ENCODE measurements at regions of chr12 and their contacts with region 1.

Region 1: GRCh38 chr12:32679091-32679919 is at the start of gene DNM1L:
- DNase-seq: peak; percentile 85 to 93 (median 92)
- ATAC-seq: peak; percentile 99
- H3K4me3 ChIP-seq: peak within 1 kb of the TSS; percentile 83
- H3K4me3 Mint-ChIP-seq: peak within 1 kb of the TSS; percentile 83 to 97 (median 93)
- H3K27ac ChIP-seq: peak within 1 kb of the TSS; percentile 82
- H3K27ac Mint-ChIP-seq: peak within 1 kb of the TSS; percentile 59 to 95 (median 89)
- H3K4me1 ChIP-seq: peaks cover 9 to 11% of the 10 kb centered on the region in 2 donors
- H3K4me1 Mint-ChIP-seq: peaks cover 16 to 39% (median 31%) of the 10 kb centered on the region in 7 donors
- H3K27me3 ChIP-seq: no peaks in the 10 kb centered on the region
- H3K27me3 Mint-ChIP-seq: no peaks in the 10 kb centered on the region
- total RNA-seq, gene DNM1L: 41.6 to 68.4 (median 58.9) TPM

Region 2: DNA sequence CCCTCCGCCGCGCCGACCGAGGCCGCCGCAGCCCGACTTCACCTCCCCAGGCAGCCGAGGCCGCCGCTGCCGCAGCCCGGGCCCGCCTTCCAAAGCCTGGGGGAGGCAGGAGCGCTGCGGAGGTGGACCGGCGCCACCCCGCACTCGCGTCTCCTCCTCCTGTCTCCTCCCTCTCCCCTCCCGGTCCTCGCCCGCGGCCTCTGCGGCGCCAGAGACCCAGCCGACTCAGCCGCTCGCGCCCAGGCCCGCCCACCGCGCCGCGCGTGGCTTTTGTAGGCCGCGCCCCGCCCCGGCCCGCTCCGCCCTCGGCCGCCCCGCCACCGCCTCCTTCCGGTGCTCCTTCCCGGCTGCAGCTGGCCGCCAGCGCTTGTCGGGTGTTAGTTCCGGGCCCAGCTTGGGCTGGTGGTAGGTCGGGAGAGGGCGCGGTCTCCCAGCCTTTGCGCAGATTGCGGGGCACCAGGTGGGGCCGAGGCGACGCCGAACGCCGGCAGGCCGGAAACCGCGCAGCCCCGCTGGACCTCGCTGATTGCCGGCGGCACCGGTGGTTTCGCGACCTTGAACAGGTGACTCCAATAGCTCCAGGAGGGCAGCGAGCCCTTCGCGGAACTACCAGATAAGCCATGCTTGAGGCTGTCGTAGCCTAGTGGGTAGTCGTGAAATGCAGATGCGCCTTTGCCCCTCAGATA is 1924.5 kb before region 1 on chr12 and contains the start of gene CAPRIN2:
- CTCF ChIA-PET with region 1: no interaction called
- POLR2A ChIA-PET with region 1: no interaction called
- intact Hi-C with region 1: loop called (anchors 1 to 10 kb)
- DNase-seq: peak; percentile 89 to 97 (median 92)
- ATAC-seq: peak; percentile 96
- H3K4me3 ChIP-seq: peak within 1 kb of the TSS; percentile 67
- H3K4me3 Mint-ChIP-seq: peak within 1 kb of the TSS; percentile 93 to 99 (median 96)
- H3K27ac ChIP-seq: peak within 1 kb of the TSS; percentile 63
- H3K27ac Mint-ChIP-seq: peak within 1 kb of the TSS; percentile 80 to 93 (median 90)
- H3K4me1 ChIP-seq: peaks cover 13 to 29% of the 10 kb centered on the region in 2 donors
- H3K4me1 Mint-ChIP-seq: peaks cover 22 to 53% (median 46%) of the 10 kb centered on the region in 7 donors
- H3K27me3 ChIP-seq: no peaks in the 10 kb centered on the region
- H3K27me3 Mint-ChIP-seq: no peaks in the 10 kb centered on the region
- total RNA-seq, gene CAPRIN2: 13.7 to 50.1 (median 28.9) TPM

Region 3: GRCh38 chr12:32106517-32107358 is 572.6 kb before region 1 on chr12 and contains the start of gene BICD1:
- CTCF ChIA-PET with region 1: no interaction called
- POLR2A ChIA-PET with region 1: no interaction called
- intact Hi-C with region 1: loop called in 1 of 2 experiments (anchors 2 kb)
- DNase-seq: peak; percentile 43 to 84 (median 65)
- ATAC-seq: peak; percentile 90
- H3K4me3 ChIP-seq: peak within 1 kb of the TSS; percentile 90
- H3K4me3 Mint-ChIP-seq: peak within 1 kb of the TSS; percentile 82 to 98 (median 96)
- H3K27ac ChIP-seq: peak within 1 kb of the TSS; percentile 67
- H3K27ac Mint-ChIP-seq: peak within 1 kb of the TSS; percentile 77 to 94 (median 91)
- H3K4me1 ChIP-seq: peaks cover 19 to 22% of the 10 kb centered on the region in 2 donors
- H3K4me1 Mint-ChIP-seq: peaks cover 11 to 42% (median 33%) of the 10 kb centered on the region in 7 donors
- H3K27me3 ChIP-seq: no peaks in the 10 kb centered on the region
- H3K27me3 Mint-ChIP-seq: peaks cover 0 to 13% (median 0%) of the 10 kb centered on the region in 5 donors
- total RNA-seq, gene BICD1: 16.7 to 25.1 (median 18.5) TPM

Region 4: GRCh38 chr12:32455607-32456071 is 223.7 kb before region 1 on chr12:
- CTCF ChIA-PET with region 1: no interaction called
- POLR2A ChIA-PET with region 1: no interaction called
- intact Hi-C with region 1: loop called in 1 of 2 experiments (anchors 2 kb)
- DNase-seq: peak in 6 of 9 donors; percentile 4 to 45 (median 32)
- ATAC-seq: peak; percentile 63
- H3K4me3 ChIP-seq: no peak overlapping the region
- H3K4me3 Mint-ChIP-seq: peak overlapping the region in 5 of 10 donors; percentile 16 to 55 (median 36)
- H3K27ac ChIP-seq: no peak overlapping the region
- H3K27ac Mint-ChIP-seq: no peak overlapping the region
- H3K4me1 ChIP-seq: no peaks in the 10 kb centered on the region
- H3K4me1 Mint-ChIP-seq: peaks cover 0 to 4% (median 0%) of the 10 kb centered on the region in 7 donors
- H3K27me3 ChIP-seq: no peaks in the 10 kb centered on the region
- H3K27me3 Mint-ChIP-seq: peaks cover 0 to 10% (median 0%) of the 10 kb centered on the region in 5 donors

Region 5: DNA sequence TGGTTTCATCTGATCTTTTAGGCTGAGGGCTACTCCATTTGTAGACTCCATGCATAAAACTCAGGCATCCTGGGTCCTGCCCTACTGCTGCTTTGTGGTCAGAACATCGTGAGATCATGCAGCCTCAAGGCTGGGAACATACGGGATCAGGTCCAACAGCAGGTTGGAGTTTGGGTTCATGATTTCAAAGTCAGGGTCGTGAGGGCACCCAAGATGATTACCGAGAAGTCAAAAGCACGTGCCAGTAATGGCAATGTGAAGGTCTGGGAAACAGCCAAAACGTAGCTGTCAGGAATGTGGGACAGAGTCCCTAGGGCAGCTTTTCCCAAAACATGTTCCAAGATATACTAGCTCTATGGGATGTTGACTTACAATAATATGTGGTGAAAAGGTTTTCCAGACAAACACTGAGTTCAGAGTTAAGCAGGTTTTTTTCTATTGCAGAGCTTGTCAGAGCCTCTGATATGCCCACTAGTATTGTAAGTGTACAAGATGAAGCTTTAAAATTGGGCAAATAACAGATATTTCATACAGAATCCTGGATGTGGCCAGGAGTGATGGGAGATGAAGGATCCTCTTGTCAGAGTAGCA is 130.5 kb before region 1 on chr12:
- CTCF ChIA-PET with region 1: no interaction called
- POLR2A ChIA-PET with region 1: no interaction called
- intact Hi-C with region 1: no loop called
- DNase-seq: no peak
- ATAC-seq: no peak
- H3K4me3 ChIP-seq: no peak overlapping the region
- H3K4me3 Mint-ChIP-seq: no peak overlapping the region
- H3K27ac ChIP-seq: no peak overlapping the region
- H3K27ac Mint-ChIP-seq: no peak overlapping the region
- H3K4me1 ChIP-seq: no peaks in the 10 kb centered on the region
- H3K4me1 Mint-ChIP-seq: peaks cover 0 to 2% (median 0%) of the 10 kb centered on the region in 7 donors
- H3K27me3 ChIP-seq: no peaks in the 10 kb centered on the region
- H3K27me3 Mint-ChIP-seq: peaks cover 0 to 5% (median 0%) of the 10 kb centered on the region in 5 donors

Region 6: DNA sequence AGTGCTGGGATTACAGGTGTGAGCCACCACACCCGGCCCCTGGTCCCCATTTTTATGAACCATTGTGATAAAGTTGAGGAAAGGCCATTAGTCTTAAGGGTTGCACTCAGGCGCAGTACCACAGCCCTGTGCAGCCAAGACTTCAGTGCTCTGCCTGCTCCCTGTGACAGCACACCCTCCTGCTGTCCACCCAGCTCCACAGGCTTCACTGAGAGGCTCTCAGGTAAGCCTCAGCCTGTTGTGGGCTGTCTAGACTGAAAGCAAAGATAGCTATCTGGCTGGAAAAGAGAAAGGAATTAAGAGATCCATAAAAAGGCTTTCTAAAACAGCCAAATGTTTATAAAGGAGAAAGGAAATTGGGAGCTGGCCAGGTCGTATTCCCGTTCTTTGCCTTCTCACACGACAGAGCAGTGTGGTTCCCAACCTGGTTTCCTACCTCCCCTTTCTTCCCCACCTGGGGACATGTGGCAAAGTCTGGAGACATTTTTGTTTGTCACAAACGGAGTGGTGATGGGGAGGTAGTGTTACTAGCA is 19.3 kb before region 1 on chr12:
- CTCF ChIA-PET with region 1: no interaction called
- POLR2A ChIA-PET with region 1: no interaction called
- intact Hi-C with region 1: loop called in 1 of 2 experiments (anchors 2 kb)
- DNase-seq: no peak
- ATAC-seq: no peak
- H3K4me3 ChIP-seq: no peak overlapping the region
- H3K4me3 Mint-ChIP-seq: no peak overlapping the region
- H3K27ac ChIP-seq: no peak overlapping the region
- H3K27ac Mint-ChIP-seq: no peak overlapping the region
- H3K4me1 ChIP-seq: no peaks in the 10 kb centered on the region
- H3K4me1 Mint-ChIP-seq: peaks cover 0 to 8% (median 0%) of the 10 kb centered on the region in 7 donors
- H3K27me3 ChIP-seq: no peaks in the 10 kb centered on the region
- H3K27me3 Mint-ChIP-seq: no peaks in the 10 kb centered on the region

Region 7: GRCh38 chr12:32755654-32756475 is 76.6 kb after region 1 on chr12 and contains the start of gene YARS2:
- CTCF ChIA-PET with region 1: interaction called, 4 read pairs
- POLR2A ChIA-PET with region 1: interaction called, 4 read pairs
- intact Hi-C with region 1: loop called (anchors 1 kb)
- DNase-seq: peak; percentile 62 to 86 (median 83)
- ATAC-seq: peak; percentile 92
- H3K4me3 ChIP-seq: peak within 1 kb of the TSS; percentile 68
- H3K4me3 Mint-ChIP-seq: peak within 1 kb of the TSS; percentile 84 to 99 (median 90)
- H3K27ac ChIP-seq: peak within 1 kb of the TSS; percentile 76
- H3K27ac Mint-ChIP-seq: peak within 1 kb of the TSS; percentile 81 to 99 (median 94)
- H3K4me1 ChIP-seq: peaks cover 13% of the 10 kb centered on the region in 2 donors
- H3K4me1 Mint-ChIP-seq: peaks cover 0 to 21% (median 20%) of the 10 kb centered on the region in 7 donors
- H3K27me3 ChIP-seq: no peaks in the 10 kb centered on the region
- H3K27me3 Mint-ChIP-seq: peaks cover 0 to 4% (median 0%) of the 10 kb centered on the region in 5 donors
- total RNA-seq, gene YARS2: 11.3 to 24.0 (median 17.9) TPM